PC-9 (cell line): ENCODE measurements at regions of chr22 and their contacts with region 1.

Region 1: DNA sequence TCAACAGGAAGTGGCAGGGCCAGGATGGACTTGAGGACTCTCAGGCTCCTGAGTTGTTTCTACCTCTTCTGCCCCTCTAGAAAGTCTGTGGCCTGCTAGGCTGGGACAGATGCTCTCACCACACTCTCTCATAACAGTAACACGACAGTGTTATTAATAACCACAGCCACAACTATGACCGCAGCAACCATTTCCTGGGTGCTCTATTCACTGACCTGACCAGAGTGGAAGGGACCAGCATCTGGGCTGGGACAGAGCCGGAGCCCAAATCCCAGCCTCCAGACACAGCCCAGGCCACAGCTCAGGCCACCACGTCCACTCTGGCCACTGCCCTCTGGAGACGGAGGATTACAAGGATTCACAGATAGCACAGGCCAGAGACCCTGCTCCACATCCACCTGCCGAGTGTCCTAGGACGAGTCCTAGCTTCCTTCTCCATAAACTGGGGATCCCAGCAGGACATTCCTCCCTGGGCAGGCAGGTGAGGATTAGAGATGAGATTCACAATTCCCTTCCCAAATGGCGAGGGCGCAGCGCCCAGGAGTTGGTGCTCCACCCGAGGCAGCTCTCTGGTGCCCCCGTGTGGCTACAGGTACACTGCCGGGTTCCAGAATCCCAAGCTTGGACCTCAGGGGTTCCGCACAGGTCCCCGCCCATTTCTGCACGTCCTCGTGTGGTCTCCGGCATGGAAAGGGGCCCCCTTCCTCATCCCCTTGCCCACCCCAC is 7.0 kb downstream of the PNPLA5 start:
- DNase-seq: peak in 1 of 2 experiments; percentile 60
- H3K4me3 ChIP-seq: no peak overlapping the region
- H3K27ac ChIP-seq: no peak overlapping the region
- H3K4me1 ChIP-seq: no peaks in the 10 kb centered on the region
- H3K27me3 ChIP-seq: peaks cover 35% of the 10 kb centered on the region
- CTCF ChIP-seq: peak; percentile 91

Region 2: GRCh38 chr22:43945632-43946383 is 61.0 kb after region 1 on chr22:
- CTCF ChIA-PET with region 1: interaction called, 9 read pairs
- POLR2A ChIA-PET with region 1: no interaction called
- intact Hi-C with region 1: loop called (anchors 5 kb)
- DNase-seq: peak in 1 of 2 experiments; percentile 49
- H3K4me3 ChIP-seq: no peak overlapping the region
- H3K27ac ChIP-seq: no peak overlapping the region
- H3K4me1 ChIP-seq: no peaks in the 10 kb centered on the region
- H3K27me3 ChIP-seq: no peaks in the 10 kb centered on the region
- CTCF ChIP-seq: peak; percentile 72